Gastrocnemius medialis (tissue), 4 donors: ENCODE measurements at regions of chr11 and their contacts with region 1.

Region 1: GRCh38 chr11:27183672-27184457 is 143.2 kb downstream of the BBOX1 start:
- DNase-seq: peak in 1 of 2 donors; percentile 19
- ATAC-seq: peak; percentile 30 to 65
- H3K4me3 ChIP-seq: no peak overlapping the region
- H3K27ac ChIP-seq: no peak overlapping the region
- H3K4me1 ChIP-seq: no peaks in the 10 kb centered on the region
- H3K27me3 ChIP-seq: no peaks in the 10 kb centered on the region
- CTCF ChIP-seq: peak; percentile 68 to 77 (median 73)
- POLR2A ChIP-seq: no peak

Region 2: GRCh38 chr11:27201454-27202236 is 17.8 kb after region 1 on chr11:
- in situ Hi-C with region 1: no loop called
- intact Hi-C with region 1: no loop called
- DNase-seq: peak; percentile 62 to 73
- ATAC-seq: peak; percentile 76 to 80
- H3K4me3 ChIP-seq: no peak overlapping the region
- H3K27ac ChIP-seq: peak overlapping the region; percentile 74 to 83 (median 78)
- H3K4me1 ChIP-seq: peaks cover 37 to 41% of the 10 kb centered on the region in 2 donors
- H3K27me3 ChIP-seq: no peaks in the 10 kb centered on the region
- CTCF ChIP-seq: no peak
- POLR2A ChIP-seq: no peak

Region 3: DNA sequence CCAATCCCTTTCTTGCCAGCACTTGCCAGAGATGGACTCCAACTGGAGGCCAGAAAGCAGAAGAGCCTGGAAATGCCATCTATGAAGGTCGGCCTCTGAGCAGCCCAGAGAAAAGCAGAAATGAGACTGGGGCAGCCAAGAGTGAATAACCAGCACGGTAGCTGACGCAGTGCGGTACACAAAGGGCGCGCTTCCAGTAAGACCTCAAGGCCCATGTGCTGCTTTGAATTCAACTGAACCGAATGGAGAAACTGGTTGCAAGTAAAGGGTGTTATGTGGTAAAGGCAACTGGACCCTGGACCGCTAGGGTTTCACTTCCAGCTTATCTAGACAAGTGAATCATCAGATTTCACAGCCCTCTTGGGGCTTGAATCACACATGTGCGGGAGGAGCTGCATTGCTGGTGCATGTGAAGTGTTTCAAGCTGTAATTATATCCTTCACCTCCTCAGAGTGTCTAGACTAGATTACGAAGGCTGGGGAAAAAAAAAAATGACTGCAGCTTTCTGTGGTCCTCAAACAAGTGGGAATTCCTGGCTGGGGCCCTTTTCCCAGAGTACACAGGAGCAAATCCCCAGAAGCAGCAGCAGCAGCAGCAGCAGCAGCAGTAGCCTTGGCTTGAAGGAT is 50.3 kb after region 1 on chr11:
- in situ Hi-C with region 1: no loop called
- intact Hi-C with region 1: loop called (anchors 10 kb)
- DNase-seq: peak; percentile 49 to 59
- ATAC-seq: peak; percentile 91 to 95
- H3K4me3 ChIP-seq: peak overlapping the region in 3 of 4 donors; percentile 11 to 28 (median 14)
- H3K27ac ChIP-seq: peak overlapping the region; percentile 70 to 86 (median 81)
- H3K4me1 ChIP-seq: peaks cover 15 to 22% of the 10 kb centered on the region in 2 donors
- H3K27me3 ChIP-seq: no peaks in the 10 kb centered on the region
- CTCF ChIP-seq: peak in 1 of 5 experiments; percentile 10
- POLR2A ChIP-seq: no peak

Region 4: DNA sequence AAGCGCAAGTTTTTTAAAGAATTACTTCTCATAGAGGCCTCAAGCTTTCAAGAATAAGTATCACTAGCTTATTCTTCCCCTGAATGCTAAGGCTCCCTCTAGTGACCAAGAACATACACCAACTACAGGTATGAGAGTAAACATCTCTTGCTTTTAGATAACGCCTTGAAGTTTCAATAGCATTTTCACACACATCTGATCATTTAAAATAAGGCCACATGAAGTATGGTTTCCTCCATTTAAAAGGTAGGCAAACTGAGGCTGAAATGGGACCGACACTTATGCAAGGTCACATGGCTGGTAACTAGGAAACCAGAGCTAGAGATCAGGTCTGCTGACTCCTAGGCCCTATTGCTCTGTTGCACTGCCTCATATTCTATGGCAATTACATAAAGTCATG is 112.6 kb after region 1 on chr11:
- in situ Hi-C with region 1: loop called (anchors 5 to 10 kb)
- intact Hi-C with region 1: loop called (anchors 1 kb)
- DNase-seq: no peak
- ATAC-seq: peak; percentile 71 to 84
- H3K4me3 ChIP-seq: no peak overlapping the region
- H3K27ac ChIP-seq: no peak overlapping the region
- H3K4me1 ChIP-seq: no peaks in the 10 kb centered on the region
- H3K27me3 ChIP-seq: no peaks in the 10 kb centered on the region
- CTCF ChIP-seq: peak; percentile 39 to 69 (median 55)
- POLR2A ChIP-seq: no peak

Region 5: GRCh38 chr11:27485930-27486773 is 302.3 kb after region 1 on chr11:
- in situ Hi-C with region 1: loop called in 3 of 4 experiments (anchors 5 to 10 kb)
- intact Hi-C with region 1: loop called (anchors 1 kb)
- DNase-seq: no peak
- ATAC-seq: peak in 1 of 2 donors; percentile 47
- H3K4me3 ChIP-seq: no peak overlapping the region
- H3K27ac ChIP-seq: no peak overlapping the region
- H3K4me1 ChIP-seq: no peaks in the 10 kb centered on the region
- H3K27me3 ChIP-seq: no peaks in the 10 kb centered on the region
- CTCF ChIP-seq: peak; percentile 77 to 96 (median 89)
- POLR2A ChIP-seq: no peak

Region 6: DNA sequence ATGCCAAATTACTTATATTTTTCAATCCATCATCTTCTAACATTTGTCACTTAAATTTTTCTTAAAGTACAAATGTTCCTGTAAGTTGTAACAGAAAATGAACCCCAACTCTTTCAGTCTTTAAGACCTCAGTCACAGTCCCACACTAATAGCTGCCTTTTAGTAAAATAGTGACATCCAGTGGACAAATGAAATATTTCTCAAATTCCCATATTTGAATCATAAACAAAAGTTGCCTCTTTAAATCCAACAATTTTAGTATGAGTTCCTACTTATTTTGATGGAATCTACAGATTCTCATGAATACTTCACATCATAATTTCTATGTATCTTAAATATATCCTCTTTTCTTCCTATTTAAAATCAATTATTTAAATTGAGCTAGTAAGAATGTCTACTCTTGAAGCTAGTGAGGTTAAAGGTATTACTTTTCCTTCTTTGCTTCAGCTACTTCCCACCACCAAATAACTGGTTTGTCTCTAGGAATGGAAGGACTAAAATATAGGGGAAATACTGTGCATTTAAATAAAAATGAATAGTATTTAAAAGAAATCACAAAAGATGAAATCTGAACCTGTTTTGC is 313.5 kb after region 1 on chr11:
- in situ Hi-C with region 1: loop called (anchors 5 to 10 kb)
- intact Hi-C with region 1: no loop called
- DNase-seq: no peak
- ATAC-seq: no peak
- H3K4me3 ChIP-seq: no peak overlapping the region
- H3K27ac ChIP-seq: no peak overlapping the region
- H3K4me1 ChIP-seq: peaks cover 20 to 22% of the 10 kb centered on the region in 2 donors
- H3K27me3 ChIP-seq: no peaks in the 10 kb centered on the region
- CTCF ChIP-seq: peak in 2 of 5 experiments; percentile 30 to 48
- POLR2A ChIP-seq: no peak